Transverse colon (tissue), 4 donors: ENCODE measurements at regions of chr4 and their contacts with region 1.

Region 1: GRCh38 chr4:172938072-172938829 is 230.4 kb upstream of the GALNT7 start:
- DNase-seq: no peak
- H3K4me3 ChIP-seq: no peak overlapping the region
- H3K27ac ChIP-seq: no peak overlapping the region
- H3K4me1 ChIP-seq: no peaks in the 10 kb centered on the region
- H3K27me3 ChIP-seq: no peaks in the 10 kb centered on the region
- CTCF ChIP-seq: no peak
- EP300 ChIP-seq: no peak
- POLR2A ChIP-seq: no peak

Region 2: GRCh38 chr4:172927096-172927814 is 11.0 kb before region 1 on chr4:
- in situ Hi-C with region 1: no loop called
- intact Hi-C with region 1: loop called (anchors 1 kb)
- DNase-seq: peak; percentile 14
- H3K4me3 ChIP-seq: no peak overlapping the region
- H3K27ac ChIP-seq: no peak overlapping the region
- H3K4me1 ChIP-seq: no peaks in the 10 kb centered on the region
- H3K27me3 ChIP-seq: no peaks in the 10 kb centered on the region
- CTCF ChIP-seq: no peak
- EP300 ChIP-seq: no peak
- POLR2A ChIP-seq: no peak

Region 3: GRCh38 chr4:173009129-173009823 is 71.0 kb after region 1 on chr4:
- in situ Hi-C with region 1: no loop called
- intact Hi-C with region 1: no loop called
- DNase-seq: no peak
- H3K4me3 ChIP-seq: no peak overlapping the region
- H3K27ac ChIP-seq: no peak overlapping the region
- H3K4me1 ChIP-seq: peaks cover 0 to 19% (median 7%) of the 10 kb centered on the region in 4 donors
- H3K27me3 ChIP-seq: no peaks in the 10 kb centered on the region
- CTCF ChIP-seq: no peak
- EP300 ChIP-seq: no peak
- POLR2A ChIP-seq: no peak